Sciatic nerve (tissue), 2 donors: ENCODE measurements at regions of chr14 and their contacts with region 1.

Region 1: DNA sequence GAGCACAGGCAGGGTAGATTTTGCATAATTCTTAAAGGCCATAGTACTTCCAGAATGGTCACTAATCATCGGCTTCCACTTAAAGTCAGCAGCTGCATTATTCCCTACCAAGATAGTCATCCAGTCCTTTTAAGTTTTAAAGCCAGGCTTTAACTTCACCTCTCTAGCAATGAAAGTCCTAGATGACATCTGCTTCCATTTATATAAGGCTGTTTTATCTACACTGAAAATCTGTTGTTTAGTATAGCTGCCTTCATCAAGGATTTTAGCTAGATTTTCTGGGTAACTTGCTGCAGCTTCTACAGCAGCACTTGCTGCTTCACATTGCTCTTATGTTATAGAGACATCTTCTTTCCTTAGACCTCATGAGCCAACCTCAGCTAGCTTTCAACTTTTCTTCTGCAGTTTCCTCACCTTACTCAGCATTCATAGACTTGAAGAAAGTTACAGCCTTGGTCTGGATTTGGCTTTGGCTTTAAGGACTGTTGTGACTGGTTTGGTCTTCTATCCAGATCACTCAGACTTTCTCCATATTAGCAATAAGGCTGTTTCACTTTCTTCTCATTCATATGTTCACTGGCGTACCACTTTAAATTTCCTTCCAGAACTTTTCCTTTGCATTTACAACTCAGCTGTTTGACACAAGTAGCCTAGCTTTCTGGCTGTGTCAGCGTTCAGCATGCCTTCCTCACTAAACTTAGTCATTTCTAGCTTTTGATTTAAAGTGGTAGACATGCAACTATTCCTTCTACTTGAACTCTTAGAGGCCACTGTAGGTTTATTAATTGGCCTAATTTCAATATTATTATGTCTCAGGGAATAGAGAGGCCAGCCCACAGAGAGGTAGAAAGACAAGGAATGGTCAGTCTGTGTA is 209.9 kb upstream of the GARIN2 start:
- DNase-seq: no peak
- ATAC-seq: no peak

Region 2: DNA sequence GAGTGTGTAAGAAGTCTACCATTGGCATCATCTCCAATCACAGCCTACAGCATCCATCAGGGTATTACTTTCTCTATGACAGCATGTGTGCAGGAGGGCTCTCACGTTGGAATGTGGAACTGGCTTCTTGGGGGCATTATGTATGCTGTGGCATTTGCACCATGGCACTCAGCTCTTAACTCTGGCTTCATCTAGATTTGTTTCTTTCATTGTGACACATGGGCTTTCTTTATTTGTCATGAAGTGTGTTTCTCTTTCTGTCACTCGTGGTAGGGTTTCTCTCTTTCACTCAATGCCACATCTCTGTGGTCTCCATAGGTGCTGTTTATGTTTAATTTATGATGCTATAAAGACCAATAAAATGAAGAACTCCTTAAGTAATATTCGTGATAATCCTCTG is 18.7 kb after region 1 on chr14:
- intact Hi-C with region 1: loop called (anchors 2 kb)
- DNase-seq: no peak
- ATAC-seq: no peak